Left ventricle myocardium inferior (tissue), 1 donor: ENCODE measurements at regions of chr18 and their contacts with region 1.

Region 1: GRCh38 chr18:30066288-30066687 is 976.3 kb downstream of the DSC3 start:
- DNase-seq: no peak
- H3K4me3 ChIP-seq: no peak overlapping the region
- H3K27ac ChIP-seq: no peak overlapping the region
- H3K4me1 ChIP-seq: no peaks in the 10 kb centered on the region
- H3K27me3 ChIP-seq: no peaks in the 10 kb centered on the region
- CTCF ChIP-seq: no peak

Region 2: DNA sequence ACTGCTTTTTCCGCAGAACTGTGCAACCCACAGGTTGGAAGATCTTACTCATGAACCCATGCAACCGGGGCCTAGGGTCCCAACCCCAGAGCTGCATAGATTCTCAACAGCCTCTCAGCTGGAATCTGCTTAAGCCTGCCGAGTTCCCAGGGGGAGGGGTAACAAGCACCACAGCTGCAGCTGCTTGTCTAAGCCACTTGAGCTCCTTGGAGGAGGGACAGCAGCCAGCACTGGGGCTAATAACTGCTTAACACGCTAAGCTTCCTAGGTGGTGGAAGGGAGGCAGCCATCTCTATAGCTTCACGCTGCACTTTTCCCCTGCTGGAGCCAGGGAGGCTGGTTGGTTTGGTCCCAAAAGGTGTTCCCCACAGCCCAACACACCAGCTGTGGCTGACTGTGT is 664.6 kb after region 1 on chr18:
- intact Hi-C with region 1: loop called (anchors 10 kb)
- DNase-seq: no peak
- H3K4me3 ChIP-seq: no peak overlapping the region
- H3K27ac ChIP-seq: no peak overlapping the region
- H3K4me1 ChIP-seq: no peaks in the 10 kb centered on the region
- H3K27me3 ChIP-seq: no peaks in the 10 kb centered on the region
- CTCF ChIP-seq: no peak